ENCODE measurements at regions of chr17 and their contacts with region 1.

Region 1: GRCh38 chr17:4412933-4413831 is 20.6 kb upstream of the SPNS3 start:
- DNase-seq: peak; percentile 88 to 90 (median 89)
- ATAC-seq: peak; percentile 95 to 99 (median 96)
- H3K4me3 ChIP-seq: no peak overlapping the region
- H3K27ac ChIP-seq: no peak overlapping the region
- H3K4me1 ChIP-seq: no peaks in the 10 kb centered on the region
- H3K27me3 ChIP-seq: no peaks in the 10 kb centered on the region
- CTCF ChIP-seq: peak; percentile 85 to 89 (median 88)
- POLR2A ChIP-seq: no peak

Region 2: GRCh38 chr17:4187076-4187475 is 226.1 kb before region 1 on chr17:
- intact Hi-C with region 1: loop called in 1 of 2 experiments (anchors 10 kb)
- DNase-seq: peak in 1 of 3 donors; percentile 19
- ATAC-seq: no peak
- H3K4me3 ChIP-seq: no peak overlapping the region
- H3K27ac ChIP-seq: no peak overlapping the region
- H3K4me1 ChIP-seq: no peaks in the 10 kb centered on the region
- H3K27me3 ChIP-seq: no peaks in the 10 kb centered on the region
- CTCF ChIP-seq: no peak
- POLR2A ChIP-seq: no peak

Region 3: DNA sequence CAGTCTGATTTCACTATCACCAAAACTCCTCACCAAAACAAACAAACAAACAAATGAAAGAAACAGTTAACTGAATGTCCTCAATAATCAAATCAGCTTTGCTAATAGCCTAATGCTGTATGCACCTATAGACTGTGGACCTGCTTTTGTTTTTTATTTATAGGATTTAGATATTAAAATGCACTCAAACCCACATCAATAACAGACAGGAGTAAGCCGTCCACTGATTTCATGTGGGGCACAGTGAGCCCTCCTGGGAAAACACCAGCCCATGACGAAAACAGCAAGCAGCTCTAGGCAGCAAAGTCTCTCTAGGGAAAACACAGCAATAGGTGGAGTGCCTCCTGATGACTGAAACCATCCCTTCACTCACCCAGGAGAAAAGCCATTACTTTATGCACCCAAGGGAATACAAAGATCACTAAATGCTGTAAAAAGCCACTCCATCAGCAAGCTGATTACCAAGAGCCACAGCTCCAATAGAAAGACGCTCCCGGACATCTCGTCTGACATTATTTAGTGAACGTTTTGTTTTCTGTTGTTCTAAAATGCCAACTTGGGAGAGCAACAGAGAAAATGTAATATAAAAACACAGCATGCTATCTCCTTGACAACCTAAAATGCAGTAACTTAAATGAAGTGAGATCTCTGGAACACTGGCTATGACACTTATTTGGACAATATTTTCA is 197.2 kb before region 1 on chr17:
- intact Hi-C with region 1: loop called in 1 of 2 experiments (anchors 10 kb)
- DNase-seq: no peak
- ATAC-seq: no peak
- H3K4me3 ChIP-seq: no peak overlapping the region
- H3K27ac ChIP-seq: no peak overlapping the region
- H3K4me1 ChIP-seq: peaks cover 0 to 15% (median 11%) of the 10 kb centered on the region in 4 donors
- H3K27me3 ChIP-seq: no peaks in the 10 kb centered on the region
- CTCF ChIP-seq: no peak
- POLR2A ChIP-seq: no peak

Region 4: DNA sequence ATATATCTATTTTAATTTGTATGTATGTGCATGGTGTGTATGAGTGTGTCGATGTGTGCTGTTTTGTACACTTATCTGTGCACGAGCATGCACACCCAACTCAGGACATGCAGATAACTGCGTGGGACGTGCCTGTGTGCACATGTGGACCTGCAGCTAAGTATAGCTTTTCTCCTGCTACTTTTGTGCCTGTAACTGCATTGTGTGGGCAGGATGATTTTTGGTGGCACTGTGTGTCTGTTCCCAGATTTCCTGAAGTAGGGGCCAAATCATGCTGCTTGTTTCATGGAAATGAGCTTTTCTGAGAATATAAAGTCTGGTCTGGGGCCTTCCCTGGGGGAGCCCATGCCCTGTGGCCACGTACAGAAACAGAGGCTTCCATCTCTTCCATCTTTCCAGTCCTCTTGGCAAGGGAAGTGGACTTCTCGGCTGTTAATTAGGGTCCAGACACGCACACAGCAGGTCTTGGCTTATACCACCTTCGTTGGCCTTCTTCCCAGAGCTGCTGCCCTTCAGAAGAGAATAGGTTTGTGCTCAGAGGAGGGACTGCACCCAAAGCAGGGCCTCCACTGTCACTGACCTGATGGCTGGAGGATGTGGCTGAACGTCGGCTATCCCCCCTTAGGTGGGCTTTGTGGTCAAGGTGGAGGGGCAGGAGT is 50.8 kb after region 1 on chr17:
- intact Hi-C with region 1: no loop called
- DNase-seq: no peak
- ATAC-seq: no peak
- H3K4me3 ChIP-seq: no peak overlapping the region
- H3K27ac ChIP-seq: no peak overlapping the region
- H3K4me1 ChIP-seq: no peaks in the 10 kb centered on the region
- H3K27me3 ChIP-seq: no peaks in the 10 kb centered on the region
- CTCF ChIP-seq: no peak
- POLR2A ChIP-seq: no peak

Measured in right lobe of liver (tissue), 6 donors.